CD8-positive, alpha-beta memory T cell (primary cell): ENCODE measurements at regions of chr2 and their contacts with region 1.

Region 1: GRCh38 chr2:85327822-85328617 is at the start of gene TGOLN2:
- DNase-seq: peak; percentile 90 to 96 (median 94)
- H3K4me3 ChIP-seq: peak within 1 kb of the TSS; percentile 86
- H3K4me3 Mint-ChIP-seq: peak within 1 kb of the TSS; percentile 92 to 100 (median 99)
- H3K27ac ChIP-seq: peak within 1 kb of the TSS; percentile 98
- H3K27ac Mint-ChIP-seq: peak within 1 kb of the TSS; percentile 94 to 100 (median 99)
- H3K4me1 ChIP-seq: peaks cover 34% of the 10 kb centered on the region
- H3K4me1 Mint-ChIP-seq: peaks cover 37 to 48% (median 44%) of the 10 kb centered on the region in 3 donors
- H3K27me3 ChIP-seq: no peaks in the 10 kb centered on the region
- H3K27me3 Mint-ChIP-seq: peaks cover 0 to 1% of the 10 kb centered on the region in 2 donors
- total RNA-seq, gene TGOLN2: 93.4 to 95.6 TPM

Region 2: GRCh38 chr2:85308896-85309555 is 19.0 kb before region 1 on chr2:
- CTCF ChIA-PET with region 1: interaction called, 5 read pairs
- POLR2A ChIA-PET with region 1: interaction called, 31 read pairs
- DNase-seq: no peak
- H3K4me3 ChIP-seq: peak overlapping the region; percentile 27
- H3K4me3 Mint-ChIP-seq: peak overlapping the region; percentile 82 to 90 (median 87)
- H3K27ac ChIP-seq: no peak overlapping the region
- H3K27ac Mint-ChIP-seq: peak overlapping the region; percentile 84 to 96 (median 90)
- H3K4me1 ChIP-seq: peaks cover 31% of the 10 kb centered on the region
- H3K4me1 Mint-ChIP-seq: peaks cover 30 to 48% (median 30%) of the 10 kb centered on the region in 3 donors
- H3K27me3 ChIP-seq: no peaks in the 10 kb centered on the region
- H3K27me3 Mint-ChIP-seq: peaks cover 0 to 6% of the 10 kb centered on the region in 2 donors

Region 3: DNA sequence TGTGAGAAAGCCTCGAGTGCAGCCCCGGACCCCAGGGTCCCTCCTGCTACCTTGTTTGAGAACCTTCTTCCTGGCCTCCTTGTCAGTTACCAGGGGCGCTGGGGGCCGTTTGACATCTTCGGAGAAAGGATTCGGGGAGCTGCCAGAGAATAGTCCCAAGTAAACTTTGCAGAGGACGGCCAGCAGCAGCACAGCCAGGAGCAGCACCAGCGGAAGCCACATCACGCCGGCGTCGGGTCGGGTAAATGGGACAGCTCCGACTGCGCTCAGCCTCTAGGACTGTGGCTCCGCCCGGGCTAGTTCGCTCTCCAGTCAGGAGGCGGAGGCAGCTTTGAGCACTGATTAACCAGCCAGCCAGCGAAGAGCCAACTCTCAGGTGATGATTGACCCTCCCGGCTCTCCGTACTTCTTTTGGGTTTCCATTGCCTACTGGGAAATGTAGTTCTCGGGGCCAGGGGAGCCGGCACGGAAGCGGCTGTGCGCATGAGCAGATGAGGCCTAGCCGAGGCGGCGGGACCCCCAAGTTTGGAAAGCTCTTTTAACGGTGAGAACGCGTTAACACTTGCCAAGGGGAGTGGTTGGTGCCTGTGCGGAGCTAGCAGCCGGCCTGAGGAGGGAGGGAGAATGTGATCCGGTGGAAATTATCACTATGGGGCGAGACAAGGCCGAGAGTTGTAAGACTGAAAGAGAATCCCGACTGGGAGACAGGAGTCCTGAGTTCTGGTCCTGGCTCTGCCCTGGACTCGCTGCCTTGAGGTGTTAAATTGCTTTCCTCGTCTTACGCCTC is 26.5 kb after region 1 on chr2 and contains the starts of genes ELMOD3 and RETSAT:
- CTCF ChIA-PET with region 1: interaction called, 3 read pairs
- POLR2A ChIA-PET with region 1: interaction called, 86 read pairs
- DNase-seq: peak; percentile 93 to 98 (median 98)
- H3K4me3 ChIP-seq: peak within 1 kb of the TSS; percentile 98
- H3K4me3 Mint-ChIP-seq: peak within 1 kb of the TSS; percentile 97 to 100 (median 99)
- H3K27ac ChIP-seq: peak within 1 kb of the TSS; percentile 89
- H3K27ac Mint-ChIP-seq: peak within 1 kb of the TSS; percentile 94 to 100 (median 100)
- H3K4me1 ChIP-seq: peaks cover 28% of the 10 kb centered on the region
- H3K4me1 Mint-ChIP-seq: peaks cover 45 to 71% (median 58%) of the 10 kb centered on the region in 3 donors
- H3K27me3 ChIP-seq: no peaks in the 10 kb centered on the region
- H3K27me3 Mint-ChIP-seq: no peaks in the 10 kb centered on the region
- total RNA-seq, gene ELMOD3: 13.6 to 14.4 TPM
- total RNA-seq, gene RETSAT: 33.4 to 36.0 TPM

Region 4: GRCh38 chr2:85380048-85380447 is 52.0 kb after region 1 on chr2:
- CTCF ChIA-PET with region 1: no interaction called
- POLR2A ChIA-PET with region 1: no interaction called
- DNase-seq: no peak
- H3K4me3 ChIP-seq: no peak overlapping the region
- H3K4me3 Mint-ChIP-seq: no peak overlapping the region
- H3K27ac ChIP-seq: no peak overlapping the region
- H3K27ac Mint-ChIP-seq: no peak overlapping the region
- H3K4me1 ChIP-seq: no peaks in the 10 kb centered on the region
- H3K4me1 Mint-ChIP-seq: no peaks in the 10 kb centered on the region
- H3K27me3 ChIP-seq: no peaks in the 10 kb centered on the region
- H3K27me3 Mint-ChIP-seq: no peaks in the 10 kb centered on the region

Region 5: GRCh38 chr2:85420536-85421259 is 92.7 kb after region 1 on chr2:
- CTCF ChIA-PET with region 1: no interaction called
- POLR2A ChIA-PET with region 1: interaction called, 14 read pairs
- DNase-seq: peak; percentile 80 to 90 (median 83)
- H3K4me3 ChIP-seq: peak overlapping the region; percentile 29
- H3K4me3 Mint-ChIP-seq: peak overlapping the region; percentile 57 to 90 (median 74)
- H3K27ac ChIP-seq: peak overlapping the region; percentile 45
- H3K27ac Mint-ChIP-seq: peak overlapping the region in 7 of 8 donors; percentile 18 to 97 (median 61)
- H3K4me1 ChIP-seq: peaks cover 27% of the 10 kb centered on the region
- H3K4me1 Mint-ChIP-seq: peaks cover 12 to 25% (median 16%) of the 10 kb centered on the region in 3 donors
- H3K27me3 ChIP-seq: no peaks in the 10 kb centered on the region
- H3K27me3 Mint-ChIP-seq: peaks cover 0 to 1% of the 10 kb centered on the region in 2 donors